Esophagus muscularis mucosa (tissue), 4 donors: ENCODE measurements at regions of chr22 and their contacts with region 1.

Region 1: GRCh38 chr22:31749636-31750364 is at the start of gene PRR14L:
- DNase-seq: peak; percentile 99
- H3K4me3 ChIP-seq: peak within 1 kb of the TSS; percentile 90 to 100 (median 100)
- H3K27ac ChIP-seq: peak within 1 kb of the TSS; percentile 86 to 91 (median 88)
- H3K4me1 ChIP-seq: peaks cover 42 to 58% (median 52%) of the 10 kb centered on the region in 4 donors
- H3K27me3 ChIP-seq: no peaks in the 10 kb centered on the region
- CTCF ChIP-seq: peak in 2 of 3 experiments; percentile 20 to 27
- EP300 ChIP-seq: no peak
- POLR2A ChIP-seq: peak; percentile 60
- total RNA-seq, gene PRR14L: 14.6 to 21.6 (median 18.5) TPM

Region 2: DNA sequence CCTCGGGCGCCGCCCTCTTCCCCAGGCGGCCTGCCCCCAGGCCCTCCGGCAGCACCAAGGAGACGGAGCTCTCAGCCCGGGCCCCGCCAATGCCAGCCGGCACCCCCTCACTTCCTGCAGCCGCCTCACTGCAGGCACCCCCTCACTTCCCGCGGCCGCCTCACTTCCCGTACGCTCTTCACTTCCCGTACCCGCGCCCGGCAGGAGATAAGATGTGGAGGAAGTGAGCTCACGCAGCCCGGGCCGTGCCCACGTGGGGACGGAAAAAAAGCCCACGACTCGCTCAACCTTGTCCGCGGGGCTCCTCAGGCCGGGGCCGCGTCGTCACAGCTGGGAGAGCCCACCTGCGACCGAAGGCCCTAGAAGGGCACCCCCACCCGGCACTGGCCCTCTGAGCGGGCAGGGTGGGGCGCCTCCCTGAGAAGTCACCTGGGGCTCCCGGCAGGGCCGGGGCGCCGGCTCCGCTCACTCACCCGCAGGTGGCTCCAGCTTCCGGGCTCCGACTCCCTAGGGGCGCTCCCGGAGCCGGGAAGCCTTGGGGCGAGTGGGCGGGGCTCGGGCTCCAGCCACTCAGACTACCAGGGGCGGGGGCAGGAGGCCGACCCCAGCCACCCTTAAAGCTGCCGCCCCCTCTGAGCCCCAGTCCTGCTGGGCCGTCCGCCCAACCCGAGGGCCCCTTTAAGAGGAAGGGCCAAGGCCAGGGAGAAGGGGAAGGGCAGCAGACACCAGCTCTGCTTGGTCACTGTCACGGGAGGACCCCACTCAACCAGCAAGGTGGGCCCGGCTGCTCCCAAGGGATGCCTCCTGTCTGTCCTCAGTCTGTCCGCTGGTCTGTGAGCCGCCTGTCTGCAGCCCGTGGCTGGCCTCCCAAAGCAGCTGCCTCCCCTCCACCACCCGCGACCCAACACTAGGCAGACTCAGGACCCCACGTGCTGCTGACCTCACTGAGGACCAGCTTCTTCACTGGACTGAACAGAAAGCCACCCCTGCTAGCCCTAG is 119.2 kb before region 1 on chr22:
- intact Hi-C with region 1: no loop called
- DNase-seq: peak; percentile 95
- H3K4me3 ChIP-seq: peak overlapping the region; percentile 69 to 85 (median 76)
- H3K27ac ChIP-seq: peak overlapping the region; percentile 77 to 85 (median 82)
- H3K4me1 ChIP-seq: peaks cover 45 to 71% (median 61%) of the 10 kb centered on the region in 4 donors
- H3K27me3 ChIP-seq: no peaks in the 10 kb centered on the region
- CTCF ChIP-seq: no peak
- EP300 ChIP-seq: no peak
- POLR2A ChIP-seq: no peak

Region 3: DNA sequence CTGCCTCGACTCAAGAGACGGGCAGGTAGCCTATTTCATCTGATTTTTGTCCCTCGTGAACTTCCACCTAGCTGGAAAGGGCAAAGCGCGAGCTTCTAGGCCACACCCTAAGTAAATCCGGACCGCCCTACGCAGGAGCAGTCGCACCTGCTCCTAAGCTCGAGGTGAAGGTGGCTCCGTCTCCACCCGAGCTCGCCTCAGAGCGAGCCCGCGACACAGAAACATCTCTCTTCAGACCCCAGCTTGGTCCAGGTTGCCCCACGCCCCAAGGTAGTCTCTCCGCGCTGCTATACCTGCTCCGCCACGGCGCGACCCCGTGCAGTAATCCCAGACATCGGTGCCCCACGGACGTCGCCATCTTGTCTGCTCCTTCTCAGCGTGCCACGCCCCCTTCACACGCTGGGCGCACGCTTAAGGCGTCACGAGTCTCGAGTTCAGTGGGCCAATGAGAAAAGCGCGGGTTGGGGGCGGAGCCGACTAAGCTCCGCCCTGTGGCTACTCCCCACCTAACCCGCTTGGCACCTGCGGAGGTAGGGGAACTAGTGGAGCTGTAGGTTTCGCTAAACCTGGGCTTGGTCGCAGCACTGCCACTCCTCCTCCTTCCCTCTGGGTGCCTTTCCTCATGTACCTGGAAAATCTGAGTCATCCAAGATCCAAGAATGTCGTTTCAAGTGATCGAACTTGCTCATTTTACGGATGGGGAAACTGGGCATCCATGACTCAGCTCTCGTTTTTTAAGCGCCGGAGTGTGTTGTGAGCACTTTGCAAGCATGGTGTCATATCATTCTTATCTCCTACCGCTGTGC is 87.7 kb before region 1 on chr22 and contains the start of gene PISD:
- intact Hi-C with region 1: loop called (anchors 5 kb)
- DNase-seq: peak; percentile 98
- H3K4me3 ChIP-seq: peak within 1 kb of the TSS; percentile 83 to 95 (median 93)
- H3K27ac ChIP-seq: peak within 1 kb of the TSS; percentile 72 to 80 (median 73)
- H3K4me1 ChIP-seq: peaks cover 15 to 24% (median 21%) of the 10 kb centered on the region in 4 donors
- H3K27me3 ChIP-seq: no peaks in the 10 kb centered on the region
- CTCF ChIP-seq: no peak
- EP300 ChIP-seq: no peak
- POLR2A ChIP-seq: no peak
- total RNA-seq, gene PISD: 14.1 to 40.1 (median 26.2) TPM

Region 4: DNA sequence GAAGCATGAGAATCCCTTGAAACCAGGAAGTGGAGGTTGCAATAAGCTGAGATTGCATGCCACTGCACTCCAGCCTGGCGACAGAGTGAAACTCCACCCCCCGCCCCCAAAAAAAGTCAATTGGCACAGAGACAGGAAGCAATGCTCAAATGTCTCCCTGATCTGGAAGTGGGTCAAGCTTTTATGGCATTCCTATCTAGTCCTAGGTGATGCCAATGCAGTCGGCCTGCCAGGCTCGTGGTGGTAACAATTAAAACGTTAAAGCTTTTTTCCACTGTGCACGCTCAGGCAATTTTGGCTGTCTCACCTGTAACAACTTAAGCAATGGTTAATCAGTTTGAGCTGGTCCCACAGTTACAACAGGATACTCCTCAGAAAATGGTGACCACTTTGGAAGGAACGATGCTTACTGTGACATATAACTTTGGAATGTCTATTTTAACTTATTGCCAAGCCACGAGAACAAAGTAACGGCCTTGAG is 68.9 kb before region 1 on chr22:
- intact Hi-C with region 1: loop called (anchors 5 kb)
- DNase-seq: no peak
- H3K4me3 ChIP-seq: no peak overlapping the region
- H3K27ac ChIP-seq: peak overlapping the region; percentile 44 to 80 (median 54)
- H3K4me1 ChIP-seq: peaks cover 15 to 42% (median 38%) of the 10 kb centered on the region in 4 donors
- H3K27me3 ChIP-seq: no peaks in the 10 kb centered on the region
- CTCF ChIP-seq: no peak
- EP300 ChIP-seq: no peak
- POLR2A ChIP-seq: no peak

Region 5: GRCh38 chr22:31943976-31944699 is 194.3 kb after region 1 on chr22 and contains the start of gene YWHAH:
- intact Hi-C with region 1: loop called (anchors 10 kb)
- DNase-seq: peak; percentile 98
- H3K4me3 ChIP-seq: peak within 1 kb of the TSS; percentile 81 to 99 (median 92)
- H3K27ac ChIP-seq: peak within 1 kb of the TSS; percentile 97 to 99 (median 99)
- H3K4me1 ChIP-seq: peaks cover 23 to 41% (median 39%) of the 10 kb centered on the region in 4 donors
- H3K27me3 ChIP-seq: no peaks in the 10 kb centered on the region
- CTCF ChIP-seq: no peak
- EP300 ChIP-seq: no peak
- POLR2A ChIP-seq: no peak
- total RNA-seq, gene YWHAH: 132 to 232 (median 183) TPM